ENCODE measurements at regions of chr9 and their contacts with region 1.

Region 1: GRCh38 chr9:128361986-128362646 is 9.1 kb upstream of the URM1 start:
- DNase-seq: peak; percentile 82 to 91
- ATAC-seq: peak; percentile 87 to 94
- H3K4me3 ChIP-seq: peak overlapping the region; percentile 38
- H3K27ac ChIP-seq: peak overlapping the region; percentile 62 to 90
- H3K4me1 ChIP-seq: peaks cover 13% of the 10 kb centered on the region
- CTCF ChIP-seq: peak; percentile 84
- EP300 ChIP-seq: no peak
- POLR2A ChIP-seq: no peak
- RAD21 ChIP-seq: peak; percentile 84 to 85

Region 2: GRCh38 chr9:128243215-128244018 is 118.7 kb before region 1 on chr9:
- CTCF ChIA-PET with region 1: no interaction called
- POLR2A ChIA-PET with region 1: no interaction called
- DNase-seq: no peak
- ATAC-seq: no peak
- H3K4me3 ChIP-seq: no peak overlapping the region
- H3K27ac ChIP-seq: no peak overlapping the region
- H3K4me1 ChIP-seq: no peaks in the 10 kb centered on the region
- CTCF ChIP-seq: no peak
- EP300 ChIP-seq: no peak
- POLR2A ChIP-seq: no peak
- RAD21 ChIP-seq: no peak

Region 3: GRCh38 chr9:128286440-128286839 is 75.7 kb before region 1 on chr9:
- CTCF ChIA-PET with region 1: interaction called, 182 read pairs
- POLR2A ChIA-PET with region 1: no interaction called
- DNase-seq: no peak
- ATAC-seq: no peak
- H3K4me3 ChIP-seq: no peak overlapping the region
- H3K27ac ChIP-seq: no peak overlapping the region
- H3K4me1 ChIP-seq: no peaks in the 10 kb centered on the region
- CTCF ChIP-seq: no peak
- EP300 ChIP-seq: no peak
- POLR2A ChIP-seq: no peak
- RAD21 ChIP-seq: no peak

Region 4: DNA sequence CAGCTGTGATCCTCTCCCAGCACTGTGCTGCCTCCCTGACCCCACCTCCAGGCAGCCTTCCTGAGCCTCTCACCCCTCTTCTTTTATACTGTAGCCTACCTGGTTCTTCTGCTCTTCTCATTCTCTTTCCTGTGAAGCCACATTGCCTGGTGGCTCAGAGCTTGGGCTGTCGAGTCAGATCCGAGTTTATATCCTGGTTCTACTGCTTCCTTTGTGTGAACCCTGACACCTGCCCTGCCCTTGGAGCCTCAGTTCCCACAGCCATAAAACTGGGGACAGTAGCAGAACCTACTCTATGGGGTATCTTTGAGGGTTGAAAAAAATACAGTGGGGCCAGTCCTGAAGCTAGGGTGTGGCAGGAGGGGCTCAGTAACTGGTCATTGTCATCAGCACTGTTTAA is 13.0 kb before region 1 on chr9:
- CTCF ChIA-PET with region 1: interaction called, 128 read pairs
- POLR2A ChIA-PET with region 1: no interaction called
- DNase-seq: no peak
- ATAC-seq: no peak
- H3K4me3 ChIP-seq: no peak overlapping the region
- H3K27ac ChIP-seq: no peak overlapping the region
- H3K4me1 ChIP-seq: no peaks in the 10 kb centered on the region
- CTCF ChIP-seq: no peak
- EP300 ChIP-seq: no peak
- POLR2A ChIP-seq: no peak
- RAD21 ChIP-seq: no peak

Region 5: GRCh38 chr9:128389395-128390149 is 27.5 kb after region 1 on chr9:
- CTCF ChIA-PET with region 1: interaction called, 16 read pairs
- POLR2A ChIA-PET with region 1: interaction called, 4 read pairs
- DNase-seq: no peak
- ATAC-seq: no peak
- H3K4me3 ChIP-seq: no peak overlapping the region
- H3K27ac ChIP-seq: no peak overlapping the region
- H3K4me1 ChIP-seq: no peaks in the 10 kb centered on the region
- CTCF ChIP-seq: no peak
- EP300 ChIP-seq: no peak
- POLR2A ChIP-seq: no peak
- RAD21 ChIP-seq: no peak

Region 6: GRCh38 chr9:128420060-128420650 is 58.0 kb after region 1 on chr9:
- CTCF ChIA-PET with region 1: interaction called, 52 read pairs
- POLR2A ChIA-PET with region 1: interaction called, 8 read pairs
- DNase-seq: peak; percentile 60 to 71
- ATAC-seq: peak; percentile 88
- H3K4me3 ChIP-seq: peak overlapping the region; percentile 80
- H3K27ac ChIP-seq: peak overlapping the region; percentile 84 to 95
- H3K4me1 ChIP-seq: peaks cover 17% of the 10 kb centered on the region; the same call in 2 of the 3 replicates
- CTCF ChIP-seq: peak; percentile 91
- EP300 ChIP-seq: no peak
- POLR2A ChIP-seq: peak; percentile 28
- RAD21 ChIP-seq: peak; percentile 24 to 45; a peak in 3 of 5 replicates